ENCODE measurements at regions of chr5 and their contacts with region 1.

Region 1: GRCh38 chr5:133868946-133869518 is 99.4 kb downstream of the C5orf15 start:
- DNase-seq: peak; percentile 76
- H3K4me3 ChIP-seq: no peak overlapping the region
- H3K27ac ChIP-seq: no peak overlapping the region
- H3K4me1 ChIP-seq: peaks cover 6% of the 10 kb centered on the region
- H3K27me3 ChIP-seq: no peaks in the 10 kb centered on the region
- CTCF ChIP-seq: peak; percentile 75 to 82
- POLR2A ChIP-seq: no peak

Region 2: GRCh38 chr5:133111299-133111698 is 757.7 kb before region 1 on chr5:
- CTCF ChIA-PET with region 1: no interaction called
- POLR2A ChIA-PET with region 1: no interaction called
- dilution Hi-C with region 1: no loop called
- intact Hi-C with region 1: loop called (anchors 5 kb)
- DNase-seq: peak; percentile 83
- H3K4me3 ChIP-seq: no peak overlapping the region
- H3K27ac ChIP-seq: no peak overlapping the region
- H3K4me1 ChIP-seq: no peaks in the 10 kb centered on the region
- H3K27me3 ChIP-seq: no peaks in the 10 kb centered on the region
- CTCF ChIP-seq: peak; percentile 83 to 84
- POLR2A ChIP-seq: no peak

Region 3: GRCh38 chr5:133589281-133589680 is 279.8 kb before region 1 on chr5:
- CTCF ChIA-PET with region 1: no interaction called
- POLR2A ChIA-PET with region 1: no interaction called
- dilution Hi-C with region 1: no loop called
- intact Hi-C with region 1: no loop called
- DNase-seq: no peak
- H3K4me3 ChIP-seq: no peak overlapping the region
- H3K27ac ChIP-seq: no peak overlapping the region
- H3K4me1 ChIP-seq: no peaks in the 10 kb centered on the region
- H3K27me3 ChIP-seq: no peaks in the 10 kb centered on the region
- CTCF ChIP-seq: no peak
- POLR2A ChIP-seq: no peak

Region 4: DNA sequence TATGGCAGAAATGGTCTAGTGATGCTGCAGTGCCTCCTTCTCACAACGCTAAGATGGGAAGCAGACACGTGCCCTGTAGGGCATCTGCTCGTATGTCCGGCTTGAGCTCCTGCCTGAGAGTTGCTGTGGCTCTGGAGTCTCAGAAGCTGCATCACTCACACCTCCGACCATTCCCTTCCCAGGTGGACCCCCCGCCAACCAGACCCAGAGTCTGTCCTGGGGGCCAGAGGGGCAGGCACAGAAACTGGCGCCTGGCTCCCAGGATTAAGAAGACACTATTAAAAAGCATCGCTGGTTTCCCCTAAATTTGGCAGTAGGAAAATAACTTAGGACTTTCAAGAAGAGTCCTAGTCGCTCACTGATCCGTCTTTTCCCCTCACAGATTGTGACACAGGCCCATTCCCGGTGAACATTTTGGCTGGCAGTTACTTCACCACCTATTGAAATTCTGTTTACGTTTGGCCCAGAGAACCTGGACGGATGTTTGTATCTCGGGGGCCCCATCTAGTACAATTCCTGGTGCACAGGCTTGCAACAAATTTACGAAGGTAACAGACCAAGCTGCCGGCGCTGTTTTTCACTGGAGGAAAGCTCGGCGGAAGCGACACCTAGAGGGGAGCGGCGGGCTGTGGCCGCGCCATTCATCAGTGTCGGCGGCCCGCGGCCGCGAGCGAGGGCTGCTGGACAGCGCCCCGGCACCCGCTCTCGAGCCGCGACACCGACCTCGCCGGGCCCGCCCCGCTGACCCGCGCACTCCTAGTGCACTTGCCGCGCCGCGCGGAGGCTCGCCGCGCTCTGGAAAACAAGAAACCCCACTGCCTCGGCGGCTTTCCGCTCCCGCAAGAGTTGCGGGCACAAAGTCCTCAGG is 258.3 kb before region 1 on chr5:
- CTCF ChIA-PET with region 1: interaction called, 6 read pairs
- POLR2A ChIA-PET with region 1: no interaction called
- dilution Hi-C with region 1: no loop called
- intact Hi-C with region 1: loop called (anchors 2 kb)
- DNase-seq: peak; percentile 26
- H3K4me3 ChIP-seq: no peak overlapping the region
- H3K27ac ChIP-seq: no peak overlapping the region
- H3K4me1 ChIP-seq: peaks cover 17% of the 10 kb centered on the region
- H3K27me3 ChIP-seq: peaks cover 46 to 71% of the 10 kb centered on the region in 2 experiments
- CTCF ChIP-seq: peak; percentile 32 to 37
- POLR2A ChIP-seq: no peak

Region 5: DNA sequence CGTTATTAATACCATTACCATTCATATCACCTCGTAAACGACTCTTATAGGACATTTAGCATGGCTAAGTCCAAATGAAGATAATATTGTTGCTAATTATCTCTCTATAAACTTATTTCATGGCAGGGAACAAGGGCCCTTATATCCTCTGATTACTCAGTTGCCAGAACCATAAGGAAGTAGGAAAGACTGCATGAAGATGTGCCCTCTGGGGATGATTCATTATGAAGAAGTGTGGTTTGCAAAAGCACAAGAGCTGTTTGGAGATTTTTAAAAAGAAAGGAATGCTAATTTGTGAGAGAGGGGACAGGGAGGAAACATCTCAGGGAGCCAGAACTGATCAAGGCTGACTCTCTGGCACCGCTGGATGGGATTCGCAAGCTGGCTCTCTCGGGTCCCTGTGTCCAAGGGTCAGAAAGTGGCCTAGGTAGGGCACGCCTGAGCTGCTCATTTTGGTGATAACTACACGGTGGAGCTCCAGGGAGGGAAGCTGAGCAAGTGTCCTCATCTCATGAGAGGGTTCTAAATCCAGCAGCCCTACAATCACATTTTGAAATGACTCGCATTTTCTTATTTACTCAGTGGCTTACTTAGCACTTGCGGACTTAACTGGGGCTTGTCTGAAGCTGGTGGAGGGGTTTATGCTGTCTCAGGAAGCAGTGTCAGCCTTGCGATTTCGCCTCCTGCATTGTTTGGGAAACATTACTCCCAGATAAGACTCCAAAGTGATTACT is 37.4 kb before region 1 on chr5:
- CTCF ChIA-PET with region 1: interaction called, 12 read pairs
- POLR2A ChIA-PET with region 1: no interaction called
- dilution Hi-C with region 1: no loop called
- intact Hi-C with region 1: no loop called
- DNase-seq: peak; percentile 92
- H3K4me3 ChIP-seq: peak overlapping the region in 1 of 3 experiments; percentile 29
- H3K27ac ChIP-seq: peak overlapping the region; percentile 83
- H3K4me1 ChIP-seq: peaks cover 23% of the 10 kb centered on the region
- H3K27me3 ChIP-seq: no peaks in the 10 kb centered on the region
- CTCF ChIP-seq: no peak
- POLR2A ChIP-seq: peak; percentile 40

Region 6: GRCh38 chr5:133848341-133848811 is 20.7 kb before region 1 on chr5:
- CTCF ChIA-PET with region 1: no interaction called
- POLR2A ChIA-PET with region 1: no interaction called
- dilution Hi-C with region 1: no loop called
- intact Hi-C with region 1: no loop called
- DNase-seq: no peak
- H3K4me3 ChIP-seq: no peak overlapping the region
- H3K27ac ChIP-seq: no peak overlapping the region
- H3K4me1 ChIP-seq: no peaks in the 10 kb centered on the region
- H3K27me3 ChIP-seq: peaks cover 0 to 1% of the 10 kb centered on the region in 2 experiments
- CTCF ChIP-seq: no peak
- POLR2A ChIP-seq: no peak

Region 7: DNA sequence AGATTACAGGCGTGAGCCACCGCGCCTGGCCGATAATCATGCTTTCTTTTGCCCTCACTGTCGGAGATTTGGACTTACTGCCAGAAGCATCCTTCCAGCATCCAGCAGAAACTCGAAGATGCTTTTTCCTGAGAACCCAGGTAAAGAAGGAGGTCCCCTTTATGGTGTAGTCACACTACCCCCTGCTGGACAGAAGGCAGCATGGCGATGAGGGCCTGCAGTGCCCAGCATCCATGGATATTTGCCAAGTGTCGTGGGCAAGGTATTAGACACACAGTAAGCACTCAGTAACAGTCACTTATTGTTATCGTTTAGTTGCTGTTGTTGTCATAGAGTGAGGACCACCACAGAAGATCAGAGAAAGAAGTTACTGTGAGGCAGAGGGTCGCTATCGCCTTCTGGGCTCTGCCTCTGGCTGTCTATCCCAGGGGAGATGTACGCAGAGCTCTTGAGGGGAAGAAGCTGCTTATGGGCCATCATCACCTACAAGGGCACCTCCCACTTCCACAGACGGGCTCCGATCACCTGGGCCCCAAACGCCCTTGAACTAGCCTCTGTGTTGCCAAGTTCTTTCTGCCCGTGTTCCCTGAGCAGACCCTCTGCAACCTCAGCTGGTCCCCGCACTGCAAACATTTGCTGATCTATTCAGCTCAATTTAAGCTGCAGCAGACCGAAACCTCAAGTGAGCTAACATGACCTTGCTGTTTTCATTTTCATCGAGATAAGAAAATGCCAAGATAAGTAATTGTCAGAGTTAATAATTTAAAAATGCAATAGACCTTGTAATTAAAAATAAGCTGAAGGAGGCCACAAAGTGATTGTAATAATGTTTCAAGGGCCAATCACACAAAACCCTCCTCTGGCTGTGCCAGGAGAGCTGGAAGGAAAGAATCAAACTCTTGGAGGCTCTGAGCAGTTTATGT is 75.5 kb after region 1 on chr5:
- CTCF ChIA-PET with region 1: no interaction called
- POLR2A ChIA-PET with region 1: no interaction called
- dilution Hi-C with region 1: no loop called
- intact Hi-C with region 1: loop called (anchors 2 kb)
- DNase-seq: peak; percentile 53
- H3K4me3 ChIP-seq: no peak overlapping the region
- H3K27ac ChIP-seq: no peak overlapping the region
- H3K4me1 ChIP-seq: no peaks in the 10 kb centered on the region
- H3K27me3 ChIP-seq: no peaks in the 10 kb centered on the region
- CTCF ChIP-seq: peak; percentile 79
- POLR2A ChIP-seq: no peak

Region 8: DNA sequence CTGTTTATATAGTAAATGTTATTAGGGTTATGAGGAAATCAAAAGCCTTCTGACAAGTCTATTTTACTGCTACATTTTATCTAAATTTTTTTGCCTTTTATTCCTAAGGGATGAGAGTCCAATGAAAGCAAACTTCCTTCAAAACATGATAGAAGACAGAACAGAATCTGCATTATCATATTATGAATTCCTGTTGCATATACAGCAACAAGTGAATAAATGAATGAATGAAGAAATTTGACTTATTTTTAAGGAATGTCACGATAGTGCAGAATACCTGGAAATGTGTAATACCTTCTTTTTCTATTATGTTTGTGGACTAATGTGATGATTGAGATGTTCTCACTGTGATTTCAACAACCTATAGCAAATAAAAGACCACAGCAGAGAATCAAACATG is 855.8 kb after region 1 on chr5:
- CTCF ChIA-PET with region 1: no interaction called
- POLR2A ChIA-PET with region 1: no interaction called
- dilution Hi-C with region 1: no loop called
- intact Hi-C with region 1: no loop called
- DNase-seq: no peak
- H3K4me3 ChIP-seq: no peak overlapping the region
- H3K27ac ChIP-seq: no peak overlapping the region
- H3K4me1 ChIP-seq: no peaks in the 10 kb centered on the region
- H3K27me3 ChIP-seq: no peaks in the 10 kb centered on the region
- CTCF ChIP-seq: no peak
- POLR2A ChIP-seq: no peak